ENCODE measurements at regions of chr12 and their contacts with region 1.

Region 1: DNA sequence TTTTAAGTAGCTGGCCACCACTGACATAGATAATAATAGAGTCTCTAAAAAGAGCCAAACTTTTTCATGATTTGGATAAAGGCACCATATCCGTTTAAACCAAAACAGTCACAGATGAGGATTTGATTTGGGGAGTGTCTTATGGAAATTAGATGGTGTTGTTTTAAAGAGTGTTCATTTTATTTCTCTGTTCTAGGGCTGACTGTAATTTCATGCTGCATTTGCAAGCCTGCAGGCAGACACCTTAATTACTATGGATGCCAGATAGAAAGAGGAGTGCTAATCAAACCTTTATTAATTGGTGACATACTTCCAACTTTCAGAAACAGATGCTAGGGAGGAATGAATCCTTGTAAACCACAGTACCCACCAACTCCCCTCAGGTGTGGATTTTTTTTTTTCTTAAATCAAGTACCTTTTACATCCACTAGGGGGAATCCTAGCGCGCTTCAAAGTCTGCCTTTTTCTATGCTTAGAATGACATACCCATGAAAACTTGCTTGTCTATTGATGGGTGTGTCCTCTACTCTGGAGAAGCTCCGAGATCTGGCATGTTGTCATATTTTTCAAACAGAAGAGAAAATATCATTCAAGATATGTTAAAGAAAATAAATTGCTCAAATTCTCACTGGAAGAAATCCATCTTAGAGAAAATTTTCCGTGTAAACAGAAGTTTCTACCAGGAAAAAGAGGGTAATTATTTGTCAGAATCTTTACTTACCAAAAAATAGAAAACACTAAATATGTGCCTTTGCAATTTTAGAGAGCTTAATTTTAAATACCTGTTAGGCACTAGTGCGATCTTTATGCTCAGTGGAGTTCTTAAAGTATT is 14.2 kb upstream of the PLXNC1 start:
- DNase-seq: peak; percentile 35
- H3K4me3 Mint-ChIP-seq: no peak overlapping the region
- H3K27ac Mint-ChIP-seq: no peak overlapping the region
- H3K4me1 Mint-ChIP-seq: peaks cover 9% of the 10 kb centered on the region
- H3K27me3 Mint-ChIP-seq: peaks cover 11% of the 10 kb centered on the region

Region 2: GRCh38 chr12:94149119-94149780 is 15.1 kb after region 1 on chr12:
- CTCF ChIA-PET with region 1: interaction called, 12 read pairs
- POLR2A ChIA-PET with region 1: interaction called, 4 read pairs
- DNase-seq: peak; percentile 49
- H3K4me3 Mint-ChIP-seq: peak overlapping the region; percentile 90
- H3K27ac Mint-ChIP-seq: no peak overlapping the region
- H3K4me1 Mint-ChIP-seq: peaks cover 24% of the 10 kb centered on the region
- H3K27me3 Mint-ChIP-seq: peaks cover 42% of the 10 kb centered on the region

Region 3: DNA sequence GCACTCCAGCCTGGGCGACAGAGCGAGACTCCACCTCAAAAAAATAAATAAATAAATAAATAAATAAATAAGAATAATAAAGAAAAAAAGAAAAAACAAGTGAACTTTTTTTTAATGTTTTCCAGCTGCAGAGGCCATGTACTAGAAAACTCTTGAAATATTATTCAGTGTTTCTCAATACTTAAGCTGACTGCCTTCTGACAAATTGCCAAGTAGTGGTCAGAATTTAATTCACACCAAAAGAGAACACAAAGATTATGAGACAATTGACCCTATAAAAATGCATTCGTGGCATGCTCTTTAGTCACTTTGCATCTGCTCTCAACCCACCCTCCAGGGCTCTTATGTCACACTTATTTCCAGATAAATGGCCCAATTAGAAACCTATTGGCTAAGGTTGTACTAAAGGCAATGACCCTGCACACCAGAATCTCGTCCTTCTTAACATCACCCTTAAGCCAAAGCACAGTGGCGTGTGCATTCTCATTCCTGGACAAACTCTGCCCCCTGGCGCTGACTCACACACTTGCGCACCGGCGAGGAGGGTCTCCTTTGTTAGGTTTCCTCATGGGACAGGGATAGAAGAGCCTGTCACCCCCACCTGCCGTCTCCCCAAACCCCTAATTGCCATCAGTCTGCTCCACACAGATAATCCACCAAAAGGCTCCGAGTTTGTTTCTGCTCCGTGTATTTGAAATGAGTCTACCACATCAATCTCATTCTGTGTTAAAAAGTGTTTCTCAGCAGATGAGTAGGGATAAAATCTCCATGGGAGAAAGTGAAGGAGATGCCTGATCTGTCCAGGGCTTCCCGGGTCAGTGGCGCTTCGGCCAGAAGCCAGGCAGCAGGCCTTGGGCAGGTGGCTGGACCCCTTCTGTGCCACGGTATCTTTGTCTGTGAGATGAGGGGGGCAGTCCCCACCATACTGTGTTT is 398.6 kb after region 1 on chr12:
- CTCF ChIA-PET with region 1: interaction called, 18 read pairs
- POLR2A ChIA-PET with region 1: no interaction called
- DNase-seq: peak; percentile 74
- H3K4me3 Mint-ChIP-seq: no peak overlapping the region
- H3K27ac Mint-ChIP-seq: no peak overlapping the region
- H3K4me1 Mint-ChIP-seq: peaks cover 29% of the 10 kb centered on the region
- H3K27me3 Mint-ChIP-seq: peaks cover 5% of the 10 kb centered on the region

Measured in activated CD4-positive, alpha-beta memory T cell treated with anti-CD3 and anti-CD28 coated beads, Interleukin-2, amount 10 ng/mL, durations not matched to agents 7 days and 5 days (primary cell).